ENCODE measurements at regions of chr12 and their contacts with region 1.

Region 1: GRCh38 chr12:54723379-54724256 is 75.5 kb upstream of the DCD start:
- DNase-seq: peak; percentile 75
- H3K4me3 ChIP-seq: no peak overlapping the region
- H3K27ac ChIP-seq: no peak overlapping the region
- H3K4me1 ChIP-seq: peaks cover 12% of the 10 kb centered on the region
- H3K27me3 ChIP-seq: no peaks in the 10 kb centered on the region
- CTCF ChIP-seq: peak; percentile 71

Region 2: DNA sequence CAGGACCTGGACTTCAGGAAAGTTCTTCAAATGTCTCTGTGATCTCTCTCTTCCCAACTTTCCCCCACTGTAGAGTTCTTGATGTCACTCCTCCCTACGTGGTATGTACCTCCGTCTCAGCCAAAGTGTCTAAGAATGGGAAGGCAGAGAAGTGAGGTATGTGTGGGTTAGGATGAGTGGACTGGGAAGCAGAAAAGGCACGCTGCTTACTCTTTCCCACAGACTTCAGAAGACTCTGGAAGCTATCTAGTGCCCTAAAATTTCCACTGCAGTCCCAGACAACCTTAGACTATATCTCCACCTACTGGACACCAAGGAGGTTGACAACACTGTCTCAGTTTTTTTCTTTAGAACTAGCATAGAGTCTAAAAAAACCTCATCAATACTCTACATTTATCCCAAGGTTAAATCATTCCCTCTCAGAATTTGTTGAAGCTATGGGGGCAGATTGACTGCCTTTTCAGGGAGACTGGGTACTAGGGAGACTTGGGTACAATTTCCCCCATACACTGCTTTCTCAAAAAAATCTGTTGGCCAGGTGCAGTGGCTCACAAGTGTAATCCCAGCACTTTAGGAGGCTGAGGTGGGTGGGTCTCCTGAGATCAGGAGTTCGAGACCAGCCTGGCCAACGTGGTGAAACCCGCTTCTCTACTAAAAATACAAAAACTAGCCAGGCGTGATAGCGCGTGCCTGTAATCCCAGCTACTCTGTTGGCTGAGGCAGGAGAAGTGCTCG is 283.9 kb before region 1 on chr12:
- CTCF ChIA-PET with region 1: no interaction called
- POLR2A ChIA-PET with region 1: no interaction called
- intact Hi-C with region 1: no loop called
- DNase-seq: peak; percentile 79
- H3K4me3 ChIP-seq: no peak overlapping the region
- H3K27ac ChIP-seq: no peak overlapping the region
- H3K4me1 ChIP-seq: peaks cover 5% of the 10 kb centered on the region
- H3K27me3 ChIP-seq: no peaks in the 10 kb centered on the region
- CTCF ChIP-seq: peak; percentile 87

Region 3: DNA sequence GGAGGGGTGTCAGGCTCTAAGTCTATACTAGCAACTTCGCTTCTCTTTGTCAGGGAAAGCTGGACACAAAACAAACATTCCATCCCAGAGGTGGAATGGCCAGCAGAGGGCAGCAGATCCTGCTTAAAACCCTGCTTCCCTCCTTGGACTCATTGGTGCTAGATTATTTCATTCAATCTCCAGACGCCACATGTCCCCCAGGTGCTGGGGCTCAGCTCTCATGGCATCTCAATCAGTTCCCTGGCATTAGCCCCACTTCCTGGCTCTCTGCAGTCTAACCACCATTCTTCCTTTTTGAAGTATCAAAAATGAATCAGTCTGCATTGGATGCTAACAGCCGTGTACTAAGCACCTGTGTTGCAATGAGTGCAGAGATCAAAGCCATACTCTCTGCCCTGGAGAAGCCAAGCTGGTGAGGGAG is 127.1 kb before region 1 on chr12:
- CTCF ChIA-PET with region 1: no interaction called
- POLR2A ChIA-PET with region 1: no interaction called
- intact Hi-C with region 1: loop called (anchors 10 kb)
- DNase-seq: peak; percentile 91
- H3K4me3 ChIP-seq: no peak overlapping the region
- H3K27ac ChIP-seq: peak overlapping the region; percentile 74
- H3K4me1 ChIP-seq: peaks cover 26% of the 10 kb centered on the region
- H3K27me3 ChIP-seq: no peaks in the 10 kb centered on the region
- CTCF ChIP-seq: peak; percentile 93

Region 4: GRCh38 chr12:54773590-54773989 is 50.0 kb after region 1 on chr12:
- CTCF ChIA-PET with region 1: no interaction called
- POLR2A ChIA-PET with region 1: no interaction called
- intact Hi-C with region 1: no loop called
- DNase-seq: no peak
- H3K4me3 ChIP-seq: no peak overlapping the region
- H3K27ac ChIP-seq: no peak overlapping the region
- H3K4me1 ChIP-seq: no peaks in the 10 kb centered on the region
- H3K27me3 ChIP-seq: no peaks in the 10 kb centered on the region
- CTCF ChIP-seq: 0 out of 2 replicates have a peak, but pooled peaks have one; percentile 15

Measured in A673 (cell line).